B cell (primary cell): ENCODE measurements at regions of chr17 and their contacts with region 1.

Region 1: GRCh38 chr17:17752089-17752820 is 71.0 kb downstream of the RAI1 start:
- DNase-seq: peak; percentile 95
- ATAC-seq: peak; percentile 85
- H3K4me3 ChIP-seq: peak overlapping the region; percentile 47 to 81 (median 71)
- H3K4me3 Mint-ChIP-seq: peak overlapping the region; percentile 91
- H3K27ac ChIP-seq: peak overlapping the region; percentile 89 to 93
- H3K27ac Mint-ChIP-seq: peak overlapping the region; percentile 96
- H3K4me1 ChIP-seq: peaks cover 75 to 88% of the 10 kb centered on the region in 2 donors
- H3K4me1 Mint-ChIP-seq: peaks cover 77% of the 10 kb centered on the region
- H3K27me3 ChIP-seq: no peaks in the 10 kb centered on the region
- H3K27me3 Mint-ChIP-seq: no peaks in the 10 kb centered on the region
- CTCF ChIP-seq: peak; percentile 43

Region 2: DNA sequence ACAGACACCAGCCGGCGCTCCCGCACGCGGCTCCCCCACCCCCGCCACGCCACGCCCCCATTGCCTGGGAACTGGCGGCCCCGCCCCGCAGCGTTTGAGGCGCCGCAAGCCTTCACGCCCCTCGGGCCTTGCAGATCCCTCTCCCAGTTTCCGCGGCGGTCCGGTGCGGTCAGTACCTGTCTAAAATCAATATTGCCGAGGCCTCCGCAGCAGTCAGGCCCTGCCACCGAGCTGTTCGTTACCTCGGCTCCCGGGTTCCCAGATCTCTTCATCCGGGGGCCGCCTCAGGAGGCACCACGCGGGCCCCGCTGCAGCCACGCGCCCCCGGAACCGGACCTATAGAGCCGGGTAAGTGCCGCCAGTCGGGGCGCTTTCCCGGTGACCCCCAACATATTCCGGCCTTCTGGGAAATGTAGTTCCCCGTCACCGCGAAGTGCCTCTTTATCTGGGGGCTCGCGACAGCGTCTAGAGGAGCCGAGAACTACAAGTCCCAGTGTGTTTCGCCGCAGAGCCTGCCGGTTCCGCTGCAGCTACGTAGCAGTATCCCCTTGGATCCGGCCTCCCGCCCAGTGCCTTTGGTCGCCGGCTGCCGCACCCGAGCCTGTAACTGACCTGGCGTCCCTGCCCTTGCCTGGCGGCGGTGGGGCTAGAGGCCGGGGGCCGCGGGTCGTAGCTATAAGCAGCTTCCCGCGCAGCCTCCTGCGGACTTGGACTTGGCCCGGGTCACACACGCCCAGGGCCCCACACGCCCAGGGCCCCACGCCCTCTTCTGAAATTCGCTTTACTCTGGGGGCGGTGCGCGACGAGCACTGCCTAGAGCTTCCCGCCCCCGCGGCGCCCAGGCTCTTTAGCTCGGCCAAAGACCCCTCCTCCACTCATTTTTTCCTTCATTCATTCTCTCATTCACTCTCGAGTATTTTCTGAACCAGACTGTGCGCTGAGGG is 160.6 kb before region 1 on chr17 and contains the start of gene PEMT:
- CTCF ChIA-PET with region 1: no interaction called
- POLR2A ChIA-PET with region 1: no interaction called
- intact Hi-C with region 1: loop called (anchors 5 kb)
- DNase-seq: peak; percentile 98
- ATAC-seq: peak; percentile 92
- H3K4me3 ChIP-seq: peak within 1 kb of the TSS; percentile 65 to 85 (median 71)
- H3K4me3 Mint-ChIP-seq: peak within 1 kb of the TSS; percentile 93
- H3K27ac ChIP-seq: peak within 1 kb of the TSS; percentile 67 to 80
- H3K27ac Mint-ChIP-seq: peak within 1 kb of the TSS; percentile 86
- H3K4me1 ChIP-seq: peaks cover 12 to 22% of the 10 kb centered on the region in 2 donors
- H3K4me1 Mint-ChIP-seq: peaks cover 16% of the 10 kb centered on the region
- H3K27me3 ChIP-seq: no peaks in the 10 kb centered on the region
- H3K27me3 Mint-ChIP-seq: no peaks in the 10 kb centered on the region
- CTCF ChIP-seq: no peak
- total RNA-seq, gene PEMT: 9.0 and 10.7 TPM in 2 replicates

Region 3: DNA sequence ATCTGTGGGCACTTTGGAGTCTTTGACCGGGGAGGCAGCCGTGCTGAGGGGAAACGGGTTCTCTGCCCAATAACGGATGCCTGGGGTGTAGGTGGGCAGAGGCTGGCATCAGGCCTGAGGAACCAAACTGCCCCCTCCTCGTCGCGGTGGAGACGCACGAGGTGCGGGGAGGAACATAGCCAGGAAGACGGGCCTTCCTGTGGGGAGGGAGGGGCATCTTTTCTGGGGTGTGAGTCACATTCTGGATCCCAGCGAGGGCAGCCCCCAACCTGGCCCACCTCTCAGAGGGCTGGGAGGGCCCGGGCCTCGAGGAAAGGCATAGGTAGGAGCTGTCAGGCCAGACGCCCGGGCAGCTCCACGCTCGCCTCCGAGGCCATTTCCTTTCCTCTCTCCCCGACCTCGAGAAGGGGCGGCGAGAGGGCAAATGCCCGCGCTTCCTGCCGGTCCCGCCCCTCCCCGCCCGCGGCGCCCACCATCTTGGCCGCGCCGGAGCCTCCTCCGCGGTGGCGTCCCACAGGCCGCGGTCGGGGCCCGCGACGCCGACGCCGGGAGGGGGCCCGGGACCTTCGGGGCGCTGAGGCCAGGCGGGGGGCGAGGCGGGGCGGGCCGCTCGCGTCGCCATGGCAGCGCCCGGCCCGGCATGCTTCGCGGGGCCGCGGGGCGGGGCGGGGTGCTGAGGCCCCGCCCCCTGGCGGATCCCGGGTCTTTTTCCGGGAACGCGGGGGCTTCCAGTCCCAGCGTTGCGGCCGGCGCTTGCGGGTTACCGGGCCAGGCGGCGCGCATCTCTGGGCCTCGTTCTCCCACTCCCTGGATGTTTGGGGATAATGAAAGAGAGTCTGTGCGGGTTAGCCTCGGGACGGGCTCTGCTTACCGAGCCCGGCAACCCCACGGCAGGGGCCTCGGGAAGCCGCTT is 57.8 kb before region 1 on chr17:
- CTCF ChIA-PET with region 1: no interaction called
- POLR2A ChIA-PET with region 1: no interaction called
- intact Hi-C with region 1: loop called (anchors 1 kb)
- DNase-seq: peak; percentile 83
- ATAC-seq: peak; percentile 75
- H3K4me3 ChIP-seq: peak overlapping the region; percentile 69 to 90 (median 85)
- H3K4me3 Mint-ChIP-seq: peak overlapping the region; percentile 95
- H3K27ac ChIP-seq: peak overlapping the region; percentile 88 to 94
- H3K27ac Mint-ChIP-seq: peak overlapping the region; percentile 98
- H3K4me1 ChIP-seq: peaks cover 48 to 52% of the 10 kb centered on the region in 2 donors
- H3K4me1 Mint-ChIP-seq: peaks cover 57% of the 10 kb centered on the region
- H3K27me3 ChIP-seq: no peaks in the 10 kb centered on the region
- H3K27me3 Mint-ChIP-seq: no peaks in the 10 kb centered on the region
- CTCF ChIP-seq: no peak

Region 4: GRCh38 chr17:17712268-17712924 is 39.9 kb before region 1 on chr17:
- CTCF ChIA-PET with region 1: no interaction called
- POLR2A ChIA-PET with region 1: no interaction called
- intact Hi-C with region 1: no loop called
- DNase-seq: peak; percentile 34
- ATAC-seq: peak; percentile 69
- H3K4me3 ChIP-seq: no peak overlapping the region
- H3K4me3 Mint-ChIP-seq: peak overlapping the region; percentile 42
- H3K27ac ChIP-seq: no peak overlapping the region
- H3K27ac Mint-ChIP-seq: no peak overlapping the region
- H3K4me1 ChIP-seq: peaks cover 12 to 24% of the 10 kb centered on the region in 2 donors
- H3K4me1 Mint-ChIP-seq: peaks cover 21% of the 10 kb centered on the region
- H3K27me3 ChIP-seq: no peaks in the 10 kb centered on the region
- H3K27me3 Mint-ChIP-seq: no peaks in the 10 kb centered on the region
- CTCF ChIP-seq: no peak

Region 5: GRCh38 chr17:17783116-17783824 is 31.0 kb after region 1 on chr17:
- CTCF ChIA-PET with region 1: no interaction called
- POLR2A ChIA-PET with region 1: interaction called, 3 read pairs
- intact Hi-C with region 1: loop called (anchors 2 kb)
- DNase-seq: peak; percentile 58
- ATAC-seq: peak; percentile 14
- H3K4me3 ChIP-seq: peak overlapping the region; percentile 21 to 74 (median 54)
- H3K4me3 Mint-ChIP-seq: peak overlapping the region; percentile 90
- H3K27ac ChIP-seq: no peak overlapping the region
- H3K27ac Mint-ChIP-seq: no peak overlapping the region
- H3K4me1 ChIP-seq: peaks cover 27 to 37% of the 10 kb centered on the region in 2 donors
- H3K4me1 Mint-ChIP-seq: peaks cover 26% of the 10 kb centered on the region
- H3K27me3 ChIP-seq: peaks cover 0 to 16% (median 3%) of the 10 kb centered on the region in 4 experiments
- H3K27me3 Mint-ChIP-seq: peaks cover 5% of the 10 kb centered on the region
- CTCF ChIP-seq: peak; percentile 24

Region 6: DNA sequence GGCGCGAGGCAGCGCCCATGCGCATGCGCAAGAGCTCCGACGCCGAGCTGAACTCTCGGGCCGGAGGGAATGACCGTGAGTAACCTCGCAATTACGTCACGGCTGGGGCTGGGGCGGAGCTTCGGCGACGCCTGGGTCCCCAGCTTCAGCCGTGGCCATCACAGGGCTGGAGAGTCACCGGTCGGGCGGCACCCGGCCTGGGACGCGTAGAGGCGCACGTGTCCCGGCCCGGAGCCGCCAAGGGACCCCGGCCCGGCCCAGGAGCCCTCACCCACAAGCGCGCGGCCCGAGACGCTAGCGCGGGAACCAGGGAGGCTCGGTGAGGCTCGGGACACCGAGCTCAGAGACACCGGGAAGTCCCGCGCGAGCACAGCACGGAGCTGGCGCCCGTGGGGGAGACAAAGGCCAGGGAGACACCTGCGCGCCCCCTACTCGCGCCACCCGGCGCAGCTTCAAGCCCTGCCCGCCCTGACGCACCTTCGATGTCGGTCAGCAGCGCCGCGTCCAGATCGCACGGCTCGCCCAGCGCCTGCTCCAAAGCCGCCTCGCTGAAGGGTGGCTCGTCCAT is 84.1 kb after region 1 on chr17:
- CTCF ChIA-PET with region 1: no interaction called
- POLR2A ChIA-PET with region 1: interaction called, 4 read pairs
- intact Hi-C with region 1: loop called (anchors 1 kb)
- DNase-seq: peak; percentile 98
- ATAC-seq: peak; percentile 69
- H3K4me3 ChIP-seq: peak overlapping the region; percentile 23 to 91 (median 89)
- H3K4me3 Mint-ChIP-seq: peak overlapping the region; percentile 88
- H3K27ac ChIP-seq: peak overlapping the region; percentile 93 to 97
- H3K27ac Mint-ChIP-seq: peak overlapping the region; percentile 91
- H3K4me1 ChIP-seq: peaks cover 45 to 64% of the 10 kb centered on the region in 2 donors
- H3K4me1 Mint-ChIP-seq: peaks cover 61% of the 10 kb centered on the region
- H3K27me3 ChIP-seq: no peaks in the 10 kb centered on the region
- H3K27me3 Mint-ChIP-seq: no peaks in the 10 kb centered on the region
- CTCF ChIP-seq: no peak

Region 7: GRCh38 chr17:18087610-18088491 is 335.6 kb after region 1 on chr17 and contains the start of gene DRG2:
- CTCF ChIA-PET with region 1: no interaction called
- POLR2A ChIA-PET with region 1: no interaction called
- intact Hi-C with region 1: loop called (anchors 5 kb)
- DNase-seq: peak; percentile 94
- ATAC-seq: peak; percentile 92
- H3K4me3 ChIP-seq: peak within 1 kb of the TSS; percentile 71 to 99 (median 91)
- H3K4me3 Mint-ChIP-seq: peak within 1 kb of the TSS; percentile 99
- H3K27ac ChIP-seq: peak within 1 kb of the TSS; percentile 67 to 90
- H3K27ac Mint-ChIP-seq: peak within 1 kb of the TSS; percentile 98
- H3K4me1 ChIP-seq: peaks cover 8 to 22% of the 10 kb centered on the region in 2 donors
- H3K4me1 Mint-ChIP-seq: peaks cover 25% of the 10 kb centered on the region
- H3K27me3 ChIP-seq: no peaks in the 10 kb centered on the region
- H3K27me3 Mint-ChIP-seq: no peaks in the 10 kb centered on the region
- CTCF ChIP-seq: no peak
- total RNA-seq, gene DRG2: 67.8 and 73.1 TPM in 2 replicates